Calu3 (cell line): ENCODE measurements at regions of chr3 and their contacts with region 1.

Region 1: DNA sequence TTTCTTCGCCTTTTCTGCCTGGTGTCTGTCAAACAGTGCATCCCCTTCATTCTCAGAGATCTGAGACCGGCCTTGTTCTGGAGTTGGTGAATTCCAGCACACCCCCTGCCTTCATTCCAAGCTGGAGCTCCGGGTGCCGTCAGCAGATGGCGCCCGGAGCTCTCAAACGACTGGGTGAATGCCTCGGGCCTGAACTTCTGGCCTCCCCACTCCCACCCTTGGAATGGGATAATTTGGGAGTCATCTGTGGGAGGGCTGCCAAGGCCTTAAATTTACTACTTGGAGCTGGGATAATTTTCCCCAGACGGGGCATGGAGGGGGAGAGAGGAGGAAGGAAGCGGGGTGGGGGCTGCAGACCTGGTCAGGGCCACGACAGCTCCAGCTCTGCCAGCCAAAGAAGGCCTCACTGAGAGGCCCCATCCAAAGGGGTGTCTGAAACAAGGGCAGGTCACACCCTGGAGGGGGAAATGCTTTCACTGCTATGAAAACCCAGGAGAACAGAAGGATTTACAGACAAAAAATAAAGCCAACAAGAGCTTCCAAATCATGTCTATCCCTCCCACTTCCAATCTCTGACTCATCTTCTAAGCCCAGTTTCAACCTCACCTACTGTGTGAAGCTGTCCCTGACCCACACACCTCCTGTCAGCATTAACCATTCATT is 187.9 kb downstream of the OPA1 start:
- DNase-seq: peak; percentile 84
- H3K4me3 Mint-ChIP-seq: no peak overlapping the region
- H3K27ac Mint-ChIP-seq: peak overlapping the region; percentile 97
- H3K4me1 Mint-ChIP-seq: peaks cover 55% of the 10 kb centered on the region
- H3K27me3 Mint-ChIP-seq: no peaks in the 10 kb centered on the region
- CTCF ChIP-seq: peak; percentile 96

Region 2: GRCh38 chr3:193831495-193832455 is 50.8 kb after region 1 on chr3:
- CTCF ChIA-PET with region 1: interaction called, 7 read pairs
- intact Hi-C with region 1: loop called (anchors 2 kb)
- DNase-seq: peak; percentile 79
- H3K4me3 Mint-ChIP-seq: peak overlapping the region; percentile 11
- H3K27ac Mint-ChIP-seq: peak overlapping the region; percentile 90
- H3K4me1 Mint-ChIP-seq: peaks cover 98% of the 10 kb centered on the region
- H3K27me3 Mint-ChIP-seq: no peaks in the 10 kb centered on the region
- CTCF ChIP-seq: no peak

Region 3: GRCh38 chr3:193861771-193862170 is 80.8 kb after region 1 on chr3:
- CTCF ChIA-PET with region 1: no interaction called
- intact Hi-C with region 1: no loop called
- DNase-seq: no peak
- H3K4me3 Mint-ChIP-seq: no peak overlapping the region
- H3K27ac Mint-ChIP-seq: no peak overlapping the region
- H3K4me1 Mint-ChIP-seq: peaks cover 57% of the 10 kb centered on the region
- H3K27me3 Mint-ChIP-seq: no peaks in the 10 kb centered on the region
- CTCF ChIP-seq: no peak

Region 4: GRCh38 chr3:193872265-193872753 is 91.4 kb after region 1 on chr3:
- CTCF ChIA-PET with region 1: interaction called, 33 read pairs
- intact Hi-C with region 1: loop called (anchors 1 kb)
- DNase-seq: peak; percentile 94
- H3K4me3 Mint-ChIP-seq: no peak overlapping the region
- H3K27ac Mint-ChIP-seq: peak overlapping the region; percentile 70
- H3K4me1 Mint-ChIP-seq: peaks cover 91% of the 10 kb centered on the region
- H3K27me3 Mint-ChIP-seq: no peaks in the 10 kb centered on the region
- CTCF ChIP-seq: no peak

Region 5: DNA sequence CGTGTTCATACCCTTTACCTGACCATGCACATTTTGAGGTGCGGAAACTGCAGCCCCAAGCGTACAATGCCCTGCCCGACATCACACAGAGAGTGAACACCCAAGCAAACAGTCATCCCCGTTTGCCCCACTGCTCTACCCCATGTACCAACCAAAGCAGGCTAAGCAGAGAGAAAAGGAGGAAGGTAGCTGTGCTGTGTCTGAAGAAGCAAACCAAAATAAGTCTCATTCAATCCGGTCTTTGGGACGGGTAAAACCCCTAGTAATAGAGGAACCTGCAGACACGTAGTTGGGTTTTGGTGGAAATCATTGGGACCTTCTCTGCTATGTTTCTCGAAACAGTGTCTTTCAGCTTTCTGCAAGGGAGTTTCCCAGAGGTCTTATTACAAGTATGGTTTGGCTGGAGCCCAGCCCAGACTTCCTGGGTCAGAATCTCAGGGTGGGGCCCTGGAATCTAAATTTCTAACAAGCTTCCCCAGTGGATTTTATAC is 190.4 kb after region 1 on chr3:
- CTCF ChIA-PET with region 1: interaction called, 17 read pairs
- intact Hi-C with region 1: loop called (anchors 1 kb)
- DNase-seq: peak; percentile 66
- H3K4me3 Mint-ChIP-seq: peak overlapping the region; percentile 56
- H3K27ac Mint-ChIP-seq: peak overlapping the region; percentile 29
- H3K4me1 Mint-ChIP-seq: peaks cover 60% of the 10 kb centered on the region
- H3K27me3 Mint-ChIP-seq: no peaks in the 10 kb centered on the region
- CTCF ChIP-seq: no peak

Region 6: DNA sequence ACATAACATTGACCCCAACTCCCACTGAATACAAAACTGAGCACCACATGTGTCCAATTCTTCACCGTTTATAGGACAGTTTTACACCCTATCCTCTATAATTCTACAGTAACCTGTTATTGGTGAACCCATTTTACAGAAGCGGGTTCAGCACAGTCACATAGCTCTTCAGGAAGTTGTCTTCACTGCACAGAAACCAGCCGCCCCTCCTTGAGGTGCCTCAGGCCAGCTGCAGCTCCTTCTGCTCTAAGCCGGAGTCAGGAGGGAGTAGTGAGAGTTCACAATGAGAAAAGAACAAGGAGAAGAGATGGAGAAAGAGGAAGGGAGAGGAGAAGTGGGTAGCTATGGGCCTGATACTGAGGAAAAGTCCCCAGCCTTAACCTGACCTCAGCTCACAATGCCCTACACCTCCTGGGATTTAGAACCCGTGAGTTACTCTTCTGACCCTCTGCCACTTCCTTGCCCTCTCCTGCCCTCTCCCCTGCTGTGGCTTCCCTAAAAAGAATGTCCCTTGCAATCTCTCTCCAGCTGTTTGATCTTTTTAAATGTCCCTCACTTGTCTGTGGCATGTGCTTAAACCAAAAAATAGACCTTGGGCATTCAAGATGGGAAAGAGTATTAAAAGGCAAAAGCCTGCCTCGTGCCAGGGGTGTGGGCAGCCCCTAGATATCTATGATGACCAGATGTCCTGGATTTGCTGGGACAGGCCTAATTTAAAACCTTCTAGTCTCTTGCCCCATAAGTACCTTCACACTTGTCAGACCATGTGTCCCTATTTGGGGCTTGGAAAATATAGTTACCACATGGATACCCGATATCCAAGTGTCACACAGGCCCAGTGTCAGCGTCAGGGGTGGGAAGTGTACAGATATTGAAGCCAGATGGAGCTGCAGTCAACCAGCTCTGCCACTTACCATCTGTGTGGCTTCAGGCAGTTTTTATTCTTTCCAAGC is 283.7 kb after region 1 on chr3:
- CTCF ChIA-PET with region 1: interaction called, 5 read pairs
- intact Hi-C with region 1: loop called (anchors 5 kb)
- DNase-seq: no peak
- H3K4me3 Mint-ChIP-seq: no peak overlapping the region
- H3K27ac Mint-ChIP-seq: no peak overlapping the region
- H3K4me1 Mint-ChIP-seq: peaks cover 42% of the 10 kb centered on the region
- H3K27me3 Mint-ChIP-seq: no peaks in the 10 kb centered on the region
- CTCF ChIP-seq: no peak

Region 7: GRCh38 chr3:194265483-194265892 is 484.5 kb after region 1 on chr3:
- CTCF ChIA-PET with region 1: interaction called, 14 read pairs
- intact Hi-C with region 1: no loop called
- DNase-seq: no peak
- H3K4me3 Mint-ChIP-seq: no peak overlapping the region
- H3K27ac Mint-ChIP-seq: no peak overlapping the region
- H3K4me1 Mint-ChIP-seq: peaks cover 31% of the 10 kb centered on the region
- H3K27me3 Mint-ChIP-seq: no peaks in the 10 kb centered on the region
- CTCF ChIP-seq: no peak

Region 8: DNA sequence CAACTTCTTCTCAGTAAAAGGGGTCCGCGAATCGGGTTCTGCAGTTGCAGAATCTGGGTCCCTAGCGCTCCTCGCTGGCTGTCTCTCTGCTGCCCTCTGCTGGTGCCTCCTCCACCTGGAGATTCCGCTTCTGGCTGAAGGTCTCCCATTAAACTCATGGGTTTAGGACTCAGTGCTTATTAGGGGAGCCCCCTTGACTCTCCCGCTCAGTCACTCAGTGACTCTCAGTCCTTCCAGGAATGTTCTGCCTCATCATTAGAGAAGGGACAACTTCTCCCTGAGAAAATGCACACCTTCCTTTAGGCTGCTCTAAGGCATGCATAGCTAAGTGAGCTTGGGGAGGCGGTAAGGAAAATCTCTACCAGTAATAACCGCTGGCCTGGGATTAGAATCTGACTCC is 563.1 kb after region 1 on chr3:
- CTCF ChIA-PET with region 1: interaction called, 10 read pairs
- intact Hi-C with region 1: no loop called
- DNase-seq: peak; percentile 94
- H3K4me3 Mint-ChIP-seq: no peak overlapping the region
- H3K27ac Mint-ChIP-seq: no peak overlapping the region
- H3K4me1 Mint-ChIP-seq: peaks cover 7% of the 10 kb centered on the region
- H3K27me3 Mint-ChIP-seq: peaks cover 57% of the 10 kb centered on the region
- CTCF ChIP-seq: peak; percentile 99